ENCODE measurements at regions of chr11 and their contacts with region 1.

Region 1: DNA sequence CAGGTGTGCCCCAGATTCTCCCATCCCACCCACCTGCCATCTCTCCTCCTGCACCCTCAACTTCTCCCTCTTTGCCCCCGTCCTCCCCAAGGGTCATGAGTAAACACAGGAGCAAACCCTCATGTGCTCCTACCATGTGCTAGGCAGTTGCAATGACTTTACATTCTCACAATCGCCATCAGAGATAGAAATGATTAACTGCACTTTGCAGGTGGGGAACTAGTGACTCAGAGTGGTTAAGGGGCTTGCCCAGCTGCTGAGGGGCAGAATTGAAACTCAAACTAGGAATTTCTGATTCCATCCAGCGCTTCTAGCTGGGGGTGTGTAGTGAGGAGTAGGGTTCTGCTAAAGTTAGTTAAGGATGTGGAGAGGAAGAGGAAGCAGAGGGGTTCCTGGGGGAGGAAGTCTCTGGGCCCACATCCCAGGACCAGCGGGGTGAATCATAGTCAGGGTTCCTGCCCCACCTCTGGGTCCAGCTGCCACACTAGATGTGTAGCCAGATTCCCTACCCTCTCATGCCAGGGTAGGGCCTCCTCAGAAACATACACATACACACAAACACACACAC is 16.0 kb upstream of the PRG2 start:
- DNase-seq: peak; percentile 68

Region 2: DNA sequence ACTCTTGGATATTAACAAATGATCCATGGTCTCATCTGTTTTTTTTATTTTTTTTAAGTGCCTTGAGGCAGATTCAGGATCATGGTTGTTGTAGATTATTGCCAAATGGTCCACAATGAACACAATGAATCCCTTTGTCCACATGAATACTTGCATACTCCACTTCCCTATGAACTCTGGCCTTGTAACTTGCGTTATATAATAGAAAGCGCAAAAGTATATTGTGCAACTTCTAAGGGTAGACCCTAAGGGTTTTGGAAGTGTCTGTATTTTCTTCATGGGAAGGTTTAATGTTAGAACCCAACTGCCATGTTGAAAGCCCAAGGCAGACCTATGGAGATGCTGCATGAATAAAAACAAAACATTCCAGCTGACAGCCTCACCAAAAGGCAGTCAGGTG is 1002.0 kb before region 1 on chr11:
- intact Hi-C with region 1: no loop called
- DNase-seq: no peak

Region 3: DNA sequence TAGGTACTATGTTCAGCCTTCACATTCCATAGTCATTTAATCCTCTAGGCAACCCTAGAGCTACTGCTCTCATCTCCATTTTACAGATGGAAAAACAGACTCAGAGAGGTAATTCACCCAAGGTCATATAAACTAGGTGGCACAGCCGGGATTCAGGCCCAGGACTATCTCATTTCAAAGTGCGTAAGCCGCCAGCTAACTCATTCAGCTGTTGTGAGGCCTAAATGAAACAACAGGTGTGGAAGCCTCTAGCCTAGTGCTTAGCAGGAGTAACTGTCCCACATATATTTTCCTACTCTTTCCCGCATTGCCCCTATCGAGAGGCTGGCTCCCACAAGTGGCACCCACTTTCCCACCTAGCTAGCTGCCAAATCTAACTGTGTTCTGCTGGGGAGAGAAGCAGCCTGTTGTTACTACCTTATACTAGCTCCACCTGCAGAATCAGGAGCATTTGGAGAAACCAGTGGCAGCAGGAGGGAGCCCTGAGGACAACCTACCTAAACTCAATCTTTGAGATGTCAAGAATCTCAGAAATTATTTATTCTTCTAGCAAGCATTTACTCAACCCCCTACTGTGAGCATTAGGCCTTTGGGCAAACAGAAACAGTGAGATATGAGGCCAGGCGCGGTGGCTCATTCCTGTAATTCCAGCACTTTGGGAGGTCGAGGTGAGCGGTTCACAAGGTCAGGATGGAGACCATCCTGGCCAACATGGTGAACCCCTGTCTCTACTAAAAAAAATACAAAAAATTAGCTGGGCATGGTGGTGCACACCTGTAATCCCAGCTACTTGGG is 46.3 kb before region 1 on chr11:
- intact Hi-C with region 1: loop called (anchors 5 kb)
- DNase-seq: no peak

Region 4: GRCh38 chr11:58006940-58007339 is 600.5 kb after region 1 on chr11:
- intact Hi-C with region 1: no loop called
- DNase-seq: no peak

Measured in cardiac septum (tissue), 1 donor.